Activated naive CD4-positive, alpha-beta T cell treated with anti-CD3 and anti-CD28 coated beads for 36 hours (primary cell): ENCODE measurements at regions of chr11 and their contacts with region 1.

Region 1: DNA sequence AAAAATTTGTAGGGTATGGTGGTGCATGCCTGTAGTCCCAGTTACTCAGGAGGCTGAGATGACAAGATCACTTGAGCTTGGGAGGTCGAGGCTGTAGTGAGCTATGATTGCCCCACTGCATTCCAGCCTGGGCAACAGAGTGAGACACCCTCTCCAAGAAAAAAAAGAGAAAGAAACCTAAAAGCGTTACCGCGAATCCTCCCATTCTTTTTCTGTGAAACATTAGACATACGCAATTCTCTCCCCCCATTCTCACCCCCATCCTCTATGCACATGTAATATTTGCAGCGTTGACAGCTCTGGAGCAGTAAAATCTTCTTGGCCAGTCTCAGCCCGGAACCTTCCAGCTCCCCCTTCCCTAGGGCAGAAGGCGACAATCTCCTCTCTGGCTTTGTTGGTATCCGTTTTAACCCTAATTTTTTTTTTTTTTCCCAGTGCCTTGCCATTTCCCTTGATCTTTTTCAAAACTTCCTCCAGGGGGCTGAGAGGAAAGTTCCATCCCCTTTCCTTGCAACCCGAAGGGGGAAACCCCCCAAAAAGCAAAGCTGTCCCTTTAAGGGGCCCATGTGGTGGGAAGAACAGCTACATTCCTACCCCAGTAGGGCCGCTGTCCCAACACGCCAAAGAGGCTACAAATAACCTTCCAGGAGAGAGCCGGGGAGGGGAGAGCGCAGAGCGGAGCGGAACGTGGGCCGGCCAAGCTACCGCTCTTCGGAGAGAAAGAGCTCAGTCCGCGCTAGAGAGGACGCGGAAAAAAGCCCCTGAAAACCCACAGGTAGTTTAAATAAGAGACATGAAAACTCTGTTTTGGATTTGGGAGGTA is 1.9 kb downstream of the LRP4 start:
- DNase-seq: peak; percentile 27
- H3K4me3 Mint-ChIP-seq: peak overlapping the region; percentile 66
- H3K27ac Mint-ChIP-seq: no peak overlapping the region
- H3K4me1 Mint-ChIP-seq: peaks cover 25% of the 10 kb centered on the region
- H3K27me3 Mint-ChIP-seq: peaks cover 62% of the 10 kb centered on the region

Region 2: DNA sequence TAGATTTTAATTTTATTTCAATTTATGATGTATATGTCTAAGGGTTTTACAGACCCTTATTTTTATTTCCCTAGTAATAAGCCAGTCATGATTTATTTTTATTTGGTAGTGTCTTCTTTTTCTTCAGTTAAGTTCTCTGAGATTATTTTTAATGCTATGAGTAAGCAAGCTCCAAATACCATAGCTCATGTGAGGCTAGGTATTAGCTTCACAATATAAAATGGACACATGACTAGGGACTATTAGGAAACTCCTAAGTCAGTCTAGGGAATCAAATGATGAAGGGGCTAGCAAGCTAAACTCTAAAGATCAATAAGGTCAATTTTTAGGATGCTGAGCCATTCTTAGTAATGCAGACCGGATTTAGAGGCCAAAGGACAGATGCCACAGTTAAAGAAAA is 116.3 kb before region 1 on chr11:
- CTCF ChIA-PET with region 1: no interaction called
- intact Hi-C with region 1: no loop called
- DNase-seq: no peak
- H3K4me3 Mint-ChIP-seq: no peak overlapping the region
- H3K27ac Mint-ChIP-seq: no peak overlapping the region
- H3K4me1 Mint-ChIP-seq: no peaks in the 10 kb centered on the region
- H3K27me3 Mint-ChIP-seq: no peaks in the 10 kb centered on the region

Region 3: DNA sequence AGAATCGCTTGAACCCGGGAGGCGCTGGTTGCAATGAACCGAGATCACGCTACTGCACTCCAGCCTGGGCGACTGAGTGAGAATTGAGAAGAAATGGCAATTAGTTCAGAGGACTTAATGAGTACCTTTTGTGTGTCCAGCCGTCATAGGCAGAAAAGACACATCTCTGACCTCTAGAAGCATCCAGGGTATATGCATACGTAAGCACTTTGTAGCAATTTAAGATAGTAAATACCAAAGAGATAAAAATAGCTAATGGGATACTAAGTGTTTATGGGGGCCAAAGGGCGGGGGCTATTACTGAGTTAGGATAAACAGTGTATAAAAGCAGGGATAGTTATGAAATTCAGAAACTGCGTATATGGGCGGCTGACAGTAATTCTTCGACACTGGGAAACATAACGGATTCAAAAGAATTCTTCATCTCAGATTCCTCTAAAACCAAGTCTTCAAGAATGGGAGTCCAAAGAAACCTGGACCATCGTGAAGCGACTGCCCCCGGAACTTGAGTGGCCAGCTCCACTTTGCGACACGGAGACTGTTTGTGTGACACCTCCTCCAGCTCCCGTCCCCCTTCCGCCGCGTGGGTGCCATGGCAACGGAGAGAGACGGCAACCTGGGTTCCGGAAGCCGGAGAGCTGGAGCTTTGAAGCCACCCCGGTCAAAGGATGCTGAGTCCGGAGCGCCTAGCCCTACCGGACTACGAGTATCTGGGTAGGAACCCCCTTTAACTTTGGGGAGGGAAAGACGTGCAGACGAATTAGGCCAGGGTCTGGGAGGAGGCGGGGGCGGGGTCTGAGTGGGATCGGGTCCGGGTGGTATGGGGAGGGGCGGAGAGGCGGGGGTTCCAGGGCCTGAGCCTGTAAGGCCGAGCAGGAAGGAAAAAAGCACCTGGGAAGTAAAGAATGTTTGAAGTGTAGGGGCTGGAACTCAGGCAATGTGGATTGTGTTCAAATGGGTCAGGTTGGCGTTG is 19.9 kb after region 1 on chr11 and contains the start of gene CSTPP1:
- CTCF ChIA-PET with region 1: interaction called, 3 read pairs
- intact Hi-C with region 1: loop called (anchors 2 kb)
- DNase-seq: peak; percentile 97
- H3K4me3 Mint-ChIP-seq: peak within 1 kb of the TSS; percentile 98
- H3K27ac Mint-ChIP-seq: peak within 1 kb of the TSS; percentile 88
- H3K4me1 Mint-ChIP-seq: peaks cover 18% of the 10 kb centered on the region
- H3K27me3 Mint-ChIP-seq: no peaks in the 10 kb centered on the region
- total RNA-seq, gene CSTPP1: 14.0 TPM